Activated CD4-positive, alpha-beta memory T cell treated with anti-CD3 and anti-CD28 coated beads, Interleukin-2, amount 10 ng/mL, durations not matched to agents 7 days and 5 days (primary cell): ENCODE measurements at regions of chr1 and their contacts with region 1.

Region 1: GRCh38 chr1:234499119-234499942 is 20.4 kb upstream of the TARBP1 start:
- DNase-seq: peak; percentile 88
- H3K4me3 Mint-ChIP-seq: peak overlapping the region; percentile 6
- H3K27ac Mint-ChIP-seq: peak overlapping the region; percentile 66
- H3K4me1 Mint-ChIP-seq: peaks cover 62% of the 10 kb centered on the region
- H3K27me3 Mint-ChIP-seq: no peaks in the 10 kb centered on the region

Region 2: DNA sequence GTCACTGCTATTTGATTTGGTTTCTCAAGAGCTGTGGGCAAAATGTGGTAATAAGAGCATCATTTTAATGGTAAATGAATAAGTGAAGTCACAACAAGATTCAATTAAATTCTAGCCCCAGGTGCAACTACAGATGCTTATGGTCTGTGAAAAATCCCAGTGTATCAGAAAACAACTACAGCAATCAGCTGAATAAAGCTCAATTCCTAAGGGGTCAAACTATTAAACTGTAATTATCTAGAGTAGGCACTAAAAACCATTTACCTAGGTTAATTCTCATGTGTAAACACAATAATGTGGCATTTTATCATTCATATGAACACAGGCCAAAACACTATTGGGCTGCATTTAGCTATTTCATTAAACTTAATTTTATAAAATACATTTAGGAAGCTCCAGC is 30.0 kb before region 1 on chr1:
- CTCF ChIA-PET with region 1: no interaction called
- POLR2A ChIA-PET with region 1: no interaction called
- DNase-seq: no peak
- H3K4me3 Mint-ChIP-seq: no peak overlapping the region
- H3K27ac Mint-ChIP-seq: no peak overlapping the region
- H3K4me1 Mint-ChIP-seq: peaks cover 18% of the 10 kb centered on the region
- H3K27me3 Mint-ChIP-seq: no peaks in the 10 kb centered on the region

Region 3: DNA sequence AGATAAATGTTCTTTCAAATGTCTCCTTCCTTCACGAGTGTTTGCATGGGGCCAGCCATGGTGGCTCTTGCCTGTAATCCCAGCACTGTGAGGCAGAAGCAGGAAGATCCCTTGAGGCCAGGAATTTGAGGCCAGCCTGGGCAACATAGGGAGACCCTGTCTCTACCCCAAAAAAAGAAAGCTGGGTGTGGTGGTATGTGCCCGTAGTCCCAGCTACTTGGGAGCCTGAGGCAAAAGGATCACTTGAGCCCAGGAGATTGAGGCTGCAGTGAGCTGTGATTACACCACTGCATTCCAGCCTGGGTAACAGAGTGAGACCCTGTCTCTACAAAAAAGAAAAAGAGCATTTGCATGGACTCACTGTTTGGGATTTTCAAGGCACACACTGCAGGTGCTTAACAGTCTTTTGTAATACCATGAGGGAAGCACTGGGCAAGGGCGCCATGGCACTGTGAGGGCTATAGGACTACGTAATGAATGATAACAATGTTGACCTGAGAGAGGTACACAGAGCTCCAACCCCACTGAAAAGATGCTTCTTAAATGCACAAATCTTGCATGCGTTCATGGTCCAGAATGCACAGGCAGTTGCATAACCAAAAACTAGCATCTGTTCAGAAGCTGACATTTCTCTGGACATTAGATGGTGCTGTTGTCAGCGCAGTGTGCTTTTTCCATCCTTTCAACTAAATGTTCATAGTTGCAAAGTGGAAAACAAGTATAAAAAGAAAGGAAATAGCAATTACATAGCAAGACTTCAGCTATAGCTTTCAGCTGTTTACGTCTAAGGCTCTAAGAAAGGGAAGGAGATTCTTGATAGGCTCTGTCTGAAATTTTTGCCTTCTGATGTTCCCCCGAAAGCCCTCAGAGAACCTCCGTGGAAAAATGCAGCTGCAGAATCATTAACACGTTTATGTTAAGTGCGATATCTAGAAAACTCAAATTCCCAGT is 12.6 kb before region 1 on chr1:
- CTCF ChIA-PET with region 1: interaction called, 15 read pairs
- POLR2A ChIA-PET with region 1: interaction called, 6 read pairs
- DNase-seq: peak; percentile 45
- H3K4me3 Mint-ChIP-seq: no peak overlapping the region
- H3K27ac Mint-ChIP-seq: no peak overlapping the region
- H3K4me1 Mint-ChIP-seq: peaks cover 39% of the 10 kb centered on the region
- H3K27me3 Mint-ChIP-seq: peaks cover 10% of the 10 kb centered on the region

Region 4: GRCh38 chr1:234553156-234553863 is 54.0 kb after region 1 on chr1:
- CTCF ChIA-PET with region 1: no interaction called
- POLR2A ChIA-PET with region 1: no interaction called
- DNase-seq: no peak
- H3K4me3 Mint-ChIP-seq: no peak overlapping the region
- H3K27ac Mint-ChIP-seq: no peak overlapping the region
- H3K4me1 Mint-ChIP-seq: no peaks in the 10 kb centered on the region
- H3K27me3 Mint-ChIP-seq: peaks cover 2% of the 10 kb centered on the region

Region 5: DNA sequence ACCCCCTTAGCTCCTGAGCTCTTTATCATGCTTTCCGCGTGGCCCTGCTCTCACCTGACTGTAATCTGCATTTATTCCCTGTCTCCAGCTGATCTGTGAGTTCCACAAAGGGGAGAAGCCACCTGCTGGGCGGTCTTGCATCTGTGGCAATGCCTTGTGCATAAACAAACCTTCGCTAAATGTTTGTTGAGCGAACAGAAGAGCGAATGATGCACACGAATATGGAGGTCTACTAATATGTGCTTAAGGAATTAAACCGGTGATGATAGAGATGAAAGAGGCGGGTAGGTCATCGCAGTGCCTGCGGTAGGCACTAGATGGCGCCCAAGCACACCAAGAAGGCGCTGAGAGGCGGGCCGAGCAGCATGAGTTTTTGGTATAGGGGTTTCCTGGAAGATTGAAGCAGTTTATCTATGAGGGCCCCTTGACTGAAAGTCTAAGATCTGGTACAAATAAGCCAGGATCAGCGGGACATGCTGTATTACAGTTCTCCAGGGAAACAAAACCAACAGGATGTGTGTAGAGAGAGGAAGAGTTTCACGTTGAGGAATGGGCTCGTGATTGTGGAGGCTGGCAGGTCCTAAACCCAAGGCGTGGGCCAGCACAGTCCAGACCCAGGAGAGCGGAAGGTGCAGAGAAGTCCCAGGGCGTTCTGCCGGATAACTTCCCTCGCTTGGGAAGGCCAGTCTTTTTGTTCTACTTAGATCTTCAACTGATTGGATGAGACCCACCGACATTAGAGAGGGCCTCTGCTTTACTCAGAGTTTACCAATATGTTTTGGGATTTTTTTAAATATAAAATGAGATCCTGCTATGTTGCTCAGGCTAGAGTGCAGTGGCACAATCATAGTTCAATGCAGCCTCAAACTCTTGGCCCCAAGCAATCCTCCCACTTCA is 594.6 kb after region 1 on chr1:
- CTCF ChIA-PET with region 1: interaction called, 16 read pairs
- POLR2A ChIA-PET with region 1: no interaction called
- DNase-seq: peak; percentile 85
- H3K4me3 Mint-ChIP-seq: no peak overlapping the region
- H3K27ac Mint-ChIP-seq: no peak overlapping the region
- H3K4me1 Mint-ChIP-seq: peaks cover 13% of the 10 kb centered on the region
- H3K27me3 Mint-ChIP-seq: peaks cover 3% of the 10 kb centered on the region